ENCODE measurements at regions of chr1 and their contacts with region 1.

Region 1: GRCh38 chr1:115717541-115717940 is 51.0 kb downstream of the CASQ2 start:
- DNase-seq: no peak
- ATAC-seq: no peak
- H3K4me3 Mint-ChIP-seq: no peak overlapping the region
- H3K27ac Mint-ChIP-seq: no peak overlapping the region
- H3K4me1 Mint-ChIP-seq: no peaks in the 10 kb centered on the region
- H3K27me3 Mint-ChIP-seq: peaks cover 3% of the 10 kb centered on the region
- CTCF ChIP-seq: no peak

Region 2: DNA sequence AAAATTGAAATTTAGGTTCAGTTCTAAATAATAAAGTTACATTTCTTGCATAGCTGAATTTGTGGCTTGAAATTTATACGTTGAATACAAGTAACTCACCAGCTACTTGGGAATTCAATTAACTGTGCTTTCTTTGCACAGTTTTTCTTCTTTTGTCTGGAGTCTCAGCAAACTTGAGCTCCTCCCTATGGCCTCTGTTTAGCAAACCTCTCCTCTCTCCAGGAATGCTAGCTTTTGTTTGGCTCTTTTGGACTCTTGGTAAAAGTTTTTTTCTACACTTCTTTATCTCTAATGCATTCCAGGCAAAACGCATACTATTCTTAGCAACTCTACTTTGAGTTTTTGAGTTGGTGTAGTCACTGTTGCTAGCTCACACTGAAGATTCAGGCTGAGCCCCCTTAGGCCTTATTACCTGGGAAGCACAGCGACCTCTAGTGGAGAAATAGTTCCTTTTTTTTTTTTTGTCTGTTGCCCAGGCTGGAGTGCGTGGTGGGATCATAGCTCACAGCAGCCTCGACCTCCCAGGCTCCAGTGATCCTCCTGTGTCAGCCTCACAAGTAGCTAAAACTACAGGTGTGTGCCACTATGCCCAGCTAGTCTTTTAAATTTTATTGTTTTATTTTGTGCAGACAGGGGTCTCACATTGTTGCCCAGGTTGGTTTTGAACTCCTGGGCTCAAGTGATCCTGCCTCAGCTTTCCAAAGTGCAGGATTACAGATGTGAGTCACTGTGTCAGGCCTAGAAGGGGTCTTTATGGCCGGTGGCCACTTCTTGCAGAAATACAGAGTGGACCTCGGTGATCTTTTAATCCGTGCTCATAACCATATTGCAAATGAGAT is 10.7 kb before region 1 on chr1:
- CTCF ChIA-PET with region 1: interaction called, 11 read pairs
- POLR2A ChIA-PET with region 1: no interaction called
- intact Hi-C with region 1: no loop called
- DNase-seq: no peak
- ATAC-seq: no peak
- H3K4me3 Mint-ChIP-seq: no peak overlapping the region
- H3K27ac Mint-ChIP-seq: no peak overlapping the region
- H3K4me1 Mint-ChIP-seq: no peaks in the 10 kb centered on the region
- H3K27me3 Mint-ChIP-seq: peaks cover 10% of the 10 kb centered on the region
- CTCF ChIP-seq: no peak

Region 3: DNA sequence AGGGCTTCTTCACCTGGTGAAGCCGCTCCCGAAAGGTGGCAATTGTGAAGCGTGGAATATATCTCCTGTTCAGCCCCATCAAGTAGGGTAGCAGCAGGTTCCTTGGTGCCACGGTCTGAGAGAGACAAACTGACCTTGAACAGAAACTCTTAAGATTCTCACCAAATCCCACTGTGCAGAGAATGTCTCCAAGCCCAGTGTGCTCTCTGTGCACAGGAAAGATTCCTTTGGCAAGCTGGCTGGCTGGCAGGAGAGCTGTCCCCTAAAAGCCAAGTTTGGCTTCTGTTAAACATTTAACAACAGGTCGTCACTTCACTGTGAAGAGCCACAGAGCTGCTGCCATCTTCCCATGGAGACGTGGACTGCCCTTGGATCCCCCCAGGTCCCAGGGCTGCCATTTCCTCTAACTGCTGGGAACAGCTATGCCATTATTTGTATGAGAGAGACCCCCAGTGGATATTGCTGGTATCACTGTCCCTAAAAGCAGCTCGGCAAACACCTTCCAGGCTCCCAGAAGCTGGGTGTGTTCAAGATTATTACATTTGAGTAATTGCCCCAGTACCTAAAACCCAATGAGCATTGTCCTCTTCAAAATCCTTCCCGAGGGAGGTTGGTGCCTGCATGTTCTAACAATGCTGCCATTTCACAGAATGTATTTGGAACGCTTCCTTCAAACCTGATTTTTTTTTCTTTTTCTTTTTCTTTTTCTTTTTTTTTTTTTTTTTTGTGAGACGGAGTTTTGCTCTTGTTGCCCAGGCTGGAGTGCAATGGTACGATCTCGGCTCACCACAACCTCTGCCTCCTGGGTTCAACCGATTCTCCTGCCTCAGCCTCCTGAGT is 781.5 kb after region 1 on chr1:
- CTCF ChIA-PET with region 1: no interaction called
- POLR2A ChIA-PET with region 1: no interaction called
- intact Hi-C with region 1: loop called (anchors 5 kb)
- DNase-seq: no peak
- ATAC-seq: peak; percentile 68
- H3K4me3 Mint-ChIP-seq: no peak overlapping the region
- H3K27ac Mint-ChIP-seq: no peak overlapping the region
- H3K4me1 Mint-ChIP-seq: peaks cover 24% of the 10 kb centered on the region
- H3K27me3 Mint-ChIP-seq: no peaks in the 10 kb centered on the region
- CTCF ChIP-seq: no peak

Measured in activated B cell treated with CpG ODN at 0.5 μM for 24 hours (primary cell).